Motor neuron (in vitro differentiated cells): ENCODE measurements at regions of chr19 and their contacts with region 1.

Region 1: GRCh38 chr19:48780631-48781391 is 25.5 kb downstream of the FGF21 start:
- ATAC-seq: peak in 5 of 8 experiments; percentile 79 to 88 (median 86)
- H3K4me3 ChIP-seq: no peak overlapping the region
- H3K27ac ChIP-seq: peak overlapping the region; percentile 25 to 63
- H3K4me1 ChIP-seq: peaks cover 10% of the 10 kb centered on the region in 2 donors

Region 2: GRCh38 chr19:48842789-48843162 is 62.0 kb after region 1 on chr19:
- in situ Hi-C with region 1: loop called in 2 of 9 experiments (anchors 10 kb)
- ATAC-seq: peak; percentile 56 to 88 (median 80)
- H3K4me3 ChIP-seq: no peak overlapping the region
- H3K27ac ChIP-seq: no peak overlapping the region
- H3K4me1 ChIP-seq: peaks cover 2% of the 10 kb centered on the region in 2 donors